HepG2 (cell line): ENCODE measurements at regions of chr19 and their contacts with region 1.

Region 1: DNA sequence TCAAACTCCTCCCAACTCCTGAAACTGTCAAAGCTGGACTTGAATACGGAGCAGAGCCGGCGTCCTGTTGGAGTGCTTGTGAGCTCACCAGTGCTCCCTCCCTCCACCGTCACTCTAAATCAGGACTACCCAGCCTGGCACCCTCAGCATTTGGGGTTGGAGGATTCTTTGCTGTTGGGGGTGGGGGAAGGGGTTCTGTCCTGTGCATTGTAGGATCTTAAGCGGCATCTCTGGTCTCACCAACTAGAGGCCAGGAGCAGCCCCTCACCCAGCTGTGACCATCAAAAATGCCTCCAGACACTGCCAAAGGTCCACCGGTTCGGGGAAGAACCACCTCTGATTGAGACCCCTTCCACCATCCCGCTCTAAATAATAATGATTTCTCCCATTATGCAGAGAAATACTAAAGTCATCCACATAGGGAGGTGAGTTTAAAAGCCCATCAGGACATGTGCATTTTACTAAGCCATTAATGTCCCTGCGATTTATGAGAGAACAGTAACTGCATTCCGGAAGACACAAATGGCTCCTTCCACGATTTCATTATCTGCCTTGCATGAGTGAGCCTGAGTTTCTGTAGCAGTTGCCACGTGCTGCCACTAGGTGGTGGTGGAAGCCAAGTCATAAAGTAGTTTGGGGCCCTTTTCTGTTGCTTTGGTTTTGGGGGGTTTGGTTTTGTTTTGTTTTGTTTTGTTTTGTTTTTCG is 16.1 kb upstream of the USP29 start:
- DNase-seq: peak; percentile 47
- ATAC-seq: peak; percentile 66
- H3K4me3 ChIP-seq: peak overlapping the region; percentile 9 to 60 (median 18); a peak in 4 of 6 replicates
- H3K27ac ChIP-seq: no peak overlapping the region
- H3K4me1 ChIP-seq: peaks cover 15% of the 10 kb centered on the region; the same call in 1 of the 2 replicates
- H3K27me3 ChIP-seq: no peaks in the 10 kb centered on the region
- CTCF ChIP-seq: peak; percentile 90
- EP300 ChIP-seq: no peak
- POLR2A ChIP-seq: no peak
- RAD21 ChIP-seq: peak; percentile 77

Region 2: GRCh38 chr19:56748378-56748777 is 355.3 kb before region 1 on chr19:
- CTCF ChIA-PET with region 1: interaction called, 19 read pairs
- POLR2A ChIA-PET with region 1: interaction called, 3 read pairs
- in situ Hi-C with region 1: loop called (anchors 5 kb)
- intact Hi-C with region 1: loop called (anchors 1 kb)
- DNase-seq: peak; percentile 47
- ATAC-seq: peak; percentile 51; the same call in 1 of the 3 replicates
- H3K4me3 ChIP-seq: no peak overlapping the region
- H3K27ac ChIP-seq: no peak overlapping the region
- H3K4me1 ChIP-seq: peaks cover 40% of the 10 kb centered on the region
- H3K27me3 ChIP-seq: peaks cover 0 to 5% of the 10 kb centered on the region in 2 experiments; a peak in 1 of 5 replicates
- CTCF ChIP-seq: peak; percentile 71
- EP300 ChIP-seq: no peak
- POLR2A ChIP-seq: no peak
- RAD21 ChIP-seq: peak; percentile 52; the same call in 1 of the 2 replicates

Region 3: GRCh38 chr19:57123882-57124281 is 20.2 kb after region 1 on chr19:
- CTCF ChIA-PET with region 1: no interaction called
- POLR2A ChIA-PET with region 1: no interaction called
- in situ Hi-C with region 1: no loop called
- intact Hi-C with region 1: no loop called
- DNase-seq: no peak
- ATAC-seq: no peak
- H3K4me3 ChIP-seq: no peak overlapping the region
- H3K27ac ChIP-seq: no peak overlapping the region
- H3K4me1 ChIP-seq: no peaks in the 10 kb centered on the region
- H3K27me3 ChIP-seq: no peaks in the 10 kb centered on the region; a peak in 2 of 5 replicates
- CTCF ChIP-seq: no peak
- EP300 ChIP-seq: no peak
- POLR2A ChIP-seq: no peak
- RAD21 ChIP-seq: no peak